A673 (cell line): ENCODE measurements at regions of chr5 and their contacts with region 1.

Region 1: GRCh38 chr5:142263346-142263745 is 61.5 kb downstream of the SPRY4 start:
- DNase-seq: no peak
- H3K4me3 ChIP-seq: no peak overlapping the region
- H3K27ac ChIP-seq: no peak overlapping the region
- H3K4me1 ChIP-seq: no peaks in the 10 kb centered on the region
- H3K27me3 ChIP-seq: no peaks in the 10 kb centered on the region
- CTCF ChIP-seq: no peak

Region 2: GRCh38 chr5:142334538-142334937 is 71.2 kb after region 1 on chr5:
- CTCF ChIA-PET with region 1: no interaction called
- POLR2A ChIA-PET with region 1: interaction called, 14 read pairs
- intact Hi-C with region 1: no loop called
- DNase-seq: no peak
- H3K4me3 ChIP-seq: no peak overlapping the region
- H3K27ac ChIP-seq: no peak overlapping the region
- H3K4me1 ChIP-seq: no peaks in the 10 kb centered on the region
- H3K27me3 ChIP-seq: no peaks in the 10 kb centered on the region
- CTCF ChIP-seq: no peak